Activated CD4-positive, alpha-beta T cell treated with anti-CD3 and anti-CD28 coated beads for 36 hours (primary cell): ENCODE measurements at regions of chr17 and their contacts with region 1.

Region 1: GRCh38 chr17:60421273-60421934 is 885 bp upstream of the CHCT1 start:
- DNase-seq: peak; percentile 89
- ATAC-seq: peak; percentile 99
- H3K4me3 Mint-ChIP-seq: peak overlapping the region; percentile 61
- H3K27ac Mint-ChIP-seq: no peak overlapping the region
- H3K4me1 Mint-ChIP-seq: peaks cover 9% of the 10 kb centered on the region
- H3K27me3 Mint-ChIP-seq: no peaks in the 10 kb centered on the region

Region 2: GRCh38 chr17:60403962-60404361 is 17.4 kb before region 1 on chr17:
- CTCF ChIA-PET with region 1: interaction called, 16 read pairs
- POLR2A ChIA-PET with region 1: no interaction called
- intact Hi-C with region 1: no loop called
- DNase-seq: no peak
- ATAC-seq: no peak
- H3K4me3 Mint-ChIP-seq: no peak overlapping the region
- H3K27ac Mint-ChIP-seq: no peak overlapping the region
- H3K4me1 Mint-ChIP-seq: no peaks in the 10 kb centered on the region
- H3K27me3 Mint-ChIP-seq: peaks cover 2% of the 10 kb centered on the region

Region 3: GRCh38 chr17:60525685-60526514 is 104.5 kb after region 1 on chr17 and contains the start of gene APPBP2:
- CTCF ChIA-PET with region 1: no interaction called
- POLR2A ChIA-PET with region 1: no interaction called
- intact Hi-C with region 1: loop called in 1 of 2 experiments (anchors 1 kb)
- DNase-seq: peak; percentile 80
- ATAC-seq: peak; percentile 82
- H3K4me3 Mint-ChIP-seq: peak within 1 kb of the TSS; percentile 96
- H3K27ac Mint-ChIP-seq: peak within 1 kb of the TSS; percentile 97
- H3K4me1 Mint-ChIP-seq: peaks cover 30% of the 10 kb centered on the region
- H3K27me3 Mint-ChIP-seq: no peaks in the 10 kb centered on the region
- total RNA-seq, gene APPBP2: 21.4 to 28.8 TPM

Region 4: GRCh38 chr17:60640503-60640902 is 219.1 kb after region 1 on chr17:
- CTCF ChIA-PET with region 1: interaction called, 5 read pairs
- POLR2A ChIA-PET with region 1: no interaction called
- intact Hi-C with region 1: loop called (anchors 1 kb)
- DNase-seq: no peak
- ATAC-seq: no peak
- H3K4me3 Mint-ChIP-seq: no peak overlapping the region
- H3K27ac Mint-ChIP-seq: no peak overlapping the region
- H3K4me1 Mint-ChIP-seq: peaks cover 9% of the 10 kb centered on the region
- H3K27me3 Mint-ChIP-seq: no peaks in the 10 kb centered on the region